Heart right ventricle (tissue), 16 donors: ENCODE measurements at regions of chr16 and their contacts with region 1.

Region 1: DNA sequence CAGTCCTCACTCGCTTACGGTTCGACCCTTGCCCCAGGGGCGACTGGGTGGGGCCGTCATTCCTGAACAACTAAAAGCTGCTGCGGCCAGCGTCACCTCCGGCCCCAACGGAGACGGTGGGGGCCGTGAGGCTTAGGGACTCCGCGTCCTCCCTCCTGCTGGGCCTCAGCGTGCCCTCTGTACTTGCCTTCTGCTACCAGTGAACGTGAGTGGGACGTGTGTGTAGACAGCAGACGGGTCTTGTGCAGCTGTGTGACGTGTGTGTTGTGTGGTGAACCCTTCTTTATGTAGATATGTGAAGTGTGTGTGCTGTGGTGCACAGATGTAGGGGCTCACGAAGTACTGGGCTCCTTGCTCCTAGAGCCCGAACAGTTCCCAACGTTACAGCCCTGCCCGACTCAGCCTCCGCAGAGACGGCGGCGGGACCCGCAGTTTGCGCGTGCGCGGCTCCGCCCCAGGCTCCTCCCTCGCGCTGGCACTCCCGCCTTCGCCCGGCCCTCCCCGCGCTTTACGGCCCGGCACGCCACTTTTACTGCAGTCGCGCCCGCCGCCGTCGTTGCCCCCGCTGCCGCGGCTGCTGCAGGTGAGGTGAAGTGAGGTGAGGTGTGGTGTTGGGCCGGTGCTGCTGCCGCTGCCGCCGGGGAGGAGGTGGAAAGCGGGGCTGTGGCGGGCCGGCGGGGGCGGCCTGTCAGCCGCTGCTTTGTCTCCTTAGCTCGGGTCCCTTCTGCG is at the start of gene PHAF1:
- DNase-seq: peak; percentile 93 to 96
- ATAC-seq: peak; percentile 98 to 99 (median 98)
- H3K4me3 ChIP-seq: peak within 1 kb of the TSS; percentile 76 to 100 (median 94)
- H3K27ac ChIP-seq: peak within 1 kb of the TSS; percentile 55 to 96 (median 86)
- H3K4me1 ChIP-seq: peaks cover 7 to 56% (median 25%) of the 10 kb centered on the region in 9 donors
- H3K27me3 ChIP-seq: no peaks in the 10 kb centered on the region
- CTCF ChIP-seq: no peak
- total RNA-seq, gene PHAF1: 8.9 to 12.7 (median 11.7) TPM

Region 2: GRCh38 chr16:66905633-66906539 is 203.7 kb before region 1 on chr16:
- intact Hi-C with region 1: no loop called
- DNase-seq: peak; percentile 62 to 88
- ATAC-seq: peak; percentile 1 to 51 (median 32)
- H3K4me3 ChIP-seq: peak overlapping the region in 4 of 10 donors; percentile 32 to 49 (median 42)
- H3K27ac ChIP-seq: peak overlapping the region; percentile 76 to 99 (median 95)
- H3K4me1 ChIP-seq: peaks cover 17 to 78% (median 44%) of the 10 kb centered on the region in 9 donors
- H3K27me3 ChIP-seq: no peaks in the 10 kb centered on the region
- CTCF ChIP-seq: no peak

Region 3: DNA sequence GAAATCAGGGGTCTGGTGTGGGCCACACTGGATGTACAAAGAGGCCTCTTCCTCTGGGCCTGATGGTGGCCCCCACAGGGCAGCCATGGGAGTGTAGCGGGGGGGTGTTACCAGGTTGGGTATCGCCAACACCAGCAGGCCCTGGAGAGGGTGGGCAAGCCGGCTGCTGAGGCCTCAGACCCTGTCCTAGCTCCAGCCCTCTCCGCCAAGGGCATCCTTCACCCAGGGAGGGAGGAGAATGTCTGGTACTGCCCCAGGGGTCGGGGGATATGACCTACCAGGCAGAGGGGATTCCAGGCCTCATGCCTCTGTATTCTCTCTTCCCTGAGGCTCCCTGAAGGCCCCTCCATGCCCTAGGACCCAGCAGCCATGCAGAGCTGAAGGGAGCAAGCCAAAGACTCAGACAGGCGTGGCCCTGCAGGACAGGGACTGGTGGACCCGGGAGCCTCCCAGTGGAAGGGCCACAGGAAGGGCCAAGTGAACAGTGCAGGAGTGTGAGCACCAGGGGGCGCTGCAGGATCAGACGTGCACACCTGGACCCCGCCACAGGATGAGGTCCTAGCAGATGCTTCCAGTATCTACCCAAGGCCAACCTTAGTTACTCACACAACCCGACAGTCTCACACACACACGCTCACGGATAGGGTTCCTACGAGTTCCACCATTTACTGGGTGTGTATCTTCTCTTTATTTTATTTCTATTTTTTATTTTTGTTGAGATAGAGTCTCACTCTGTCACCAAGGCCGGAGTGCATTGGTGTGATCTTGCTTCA is 132.0 kb before region 1 on chr16:
- intact Hi-C with region 1: loop called in 1 of 10 experiments (anchors 5 kb)
- DNase-seq: peak; percentile 88 to 91
- ATAC-seq: peak; percentile 94 to 97 (median 96)
- H3K4me3 ChIP-seq: no peak overlapping the region
- H3K27ac ChIP-seq: no peak overlapping the region
- H3K4me1 ChIP-seq: peaks cover 0 to 7% (median 0%) of the 10 kb centered on the region in 9 donors
- H3K27me3 ChIP-seq: no peaks in the 10 kb centered on the region
- CTCF ChIP-seq: peak; percentile 90 to 98 (median 96)

Region 4: GRCh38 chr16:67028555-67029248 is 80.9 kb before region 1 on chr16 and contains the start of gene CBFB:
- intact Hi-C with region 1: loop called in 2 of 10 experiments (anchors 2 to 5 kb)
- DNase-seq: peak; percentile 91 to 94
- ATAC-seq: peak; percentile 90 to 95 (median 94)
- H3K4me3 ChIP-seq: peak within 1 kb of the TSS; percentile 85 to 99 (median 96)
- H3K27ac ChIP-seq: peak within 1 kb of the TSS; percentile 93 to 100 (median 99)
- H3K4me1 ChIP-seq: peaks cover 3 to 39% (median 26%) of the 10 kb centered on the region in 9 donors
- H3K27me3 ChIP-seq: no peaks in the 10 kb centered on the region
- CTCF ChIP-seq: no peak
- total RNA-seq, gene CBFB: 22.2 to 36.4 (median 29.8) TPM

Region 5: DNA sequence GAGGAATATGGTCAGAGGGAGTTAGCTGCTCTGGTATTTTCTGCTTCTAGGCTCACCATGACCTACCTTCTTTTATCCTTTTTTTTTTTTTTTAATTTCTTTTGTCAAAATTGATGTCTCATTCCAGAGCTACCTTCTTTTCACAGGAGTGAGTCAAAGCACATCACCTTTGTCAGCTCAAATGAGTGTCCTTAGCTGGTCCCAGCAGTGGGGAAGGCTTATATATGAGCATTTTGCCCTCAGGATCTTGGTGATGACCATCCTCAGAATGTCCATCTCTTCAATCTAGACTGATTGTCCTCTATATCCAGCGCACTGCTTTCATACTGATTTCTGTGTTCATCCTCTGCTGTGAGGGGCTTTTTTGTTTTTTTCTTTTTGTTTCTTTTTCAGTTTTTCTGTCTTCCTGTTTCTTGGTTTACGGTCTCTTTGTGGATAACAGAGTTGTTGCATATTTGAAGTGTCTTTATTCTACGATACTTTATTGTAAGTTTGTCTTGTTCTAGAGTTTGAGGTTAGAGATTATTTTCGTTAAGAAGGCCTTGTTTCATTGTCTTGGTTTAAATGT is 55.7 kb before region 1 on chr16:
- intact Hi-C with region 1: no loop called
- DNase-seq: no peak
- ATAC-seq: no peak
- H3K4me3 ChIP-seq: no peak overlapping the region
- H3K27ac ChIP-seq: peak overlapping the region in 1 of 10 donors; percentile 23
- H3K4me1 ChIP-seq: peaks cover 0 to 37% (median 0%) of the 10 kb centered on the region in 9 donors
- H3K27me3 ChIP-seq: no peaks in the 10 kb centered on the region
- CTCF ChIP-seq: no peak

Region 6: DNA sequence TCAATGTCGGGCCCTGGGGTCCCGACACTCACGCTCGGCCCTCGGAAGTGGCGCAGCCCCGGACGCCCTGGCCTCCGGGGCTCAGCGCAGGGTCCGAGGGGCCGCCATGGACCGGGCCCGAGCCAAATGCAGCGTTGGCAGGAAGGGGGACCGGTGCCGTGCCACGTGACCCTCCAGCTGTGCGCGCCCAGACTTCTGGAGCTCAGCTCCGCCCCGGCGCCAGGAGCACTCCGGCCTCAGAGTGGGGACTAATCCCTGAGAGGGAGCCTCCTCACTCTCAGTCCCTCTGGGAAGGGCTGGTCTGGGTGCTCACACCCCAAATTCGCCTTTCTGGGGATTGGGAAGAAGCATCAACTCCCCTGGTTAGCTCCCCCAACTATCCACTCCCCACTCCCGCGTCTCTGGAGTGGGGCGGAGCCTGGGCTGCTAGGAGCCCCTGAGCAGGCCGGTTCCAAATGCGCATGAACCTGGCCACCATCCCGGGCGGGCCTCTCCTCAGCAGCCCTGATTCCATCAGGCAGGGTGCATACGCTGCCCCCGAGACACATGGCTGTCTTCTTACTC is 41.3 kb after region 1 on chr16 and contains the start of gene B3GNT9:
- intact Hi-C with region 1: loop called in 2 of 10 experiments (anchors 2 to 5 kb)
- DNase-seq: peak; percentile 76 to 80
- ATAC-seq: peak; percentile 62 to 90 (median 82)
- H3K4me3 ChIP-seq: peak within 1 kb of the TSS; percentile 49 to 87 (median 68)
- H3K27ac ChIP-seq: peak within 1 kb of the TSS; percentile 64 to 90 (median 83)
- H3K4me1 ChIP-seq: peaks cover 4 to 34% (median 25%) of the 10 kb centered on the region in 9 donors
- H3K27me3 ChIP-seq: peaks cover 0 to 30% (median 0%) of the 10 kb centered on the region in 7 donors
- CTCF ChIP-seq: no peak
- total RNA-seq, gene B3GNT9: 7.4 to 17.6 (median 9.6) TPM

Region 7: GRCh38 chr16:67159593-67160406 is 50.2 kb after region 1 on chr16 and contains the starts of genes FBXL8 and TRADD:
- intact Hi-C with region 1: loop called in 2 of 10 experiments (anchors 2 to 5 kb)
- DNase-seq: peak; percentile 68 to 79
- ATAC-seq: peak; percentile 68 to 84 (median 73)
- H3K4me3 ChIP-seq: peak within 1 kb of the TSS; percentile 81 to 99 (median 91)
- H3K27ac ChIP-seq: peak within 1 kb of the TSS; percentile 3 to 95 (median 86)
- H3K4me1 ChIP-seq: peaks cover 34 to 71% (median 59%) of the 10 kb centered on the region in 9 donors
- H3K27me3 ChIP-seq: peaks cover 0 to 36% (median 18%) of the 10 kb centered on the region in 7 donors
- CTCF ChIP-seq: peak in 7 of 9 donors; percentile 0 to 59 (median 47)
- total RNA-seq, gene FBXL8: 3.9 to 10.5 (median 5.0) TPM
- total RNA-seq, gene TRADD: 4.8 to 12.4 (median 5.7) TPM